ENCODE measurements at regions of chr11 and their contacts with region 1.

Region 1: GRCh38 chr11:6812390-6813005 is 13.0 kb upstream of the OR6A2 start:
- DNase-seq: peak; percentile 44
- ATAC-seq: peak; percentile 99
- H3K4me3 Mint-ChIP-seq: no peak overlapping the region
- H3K27ac Mint-ChIP-seq: no peak overlapping the region
- H3K4me1 Mint-ChIP-seq: no peaks in the 10 kb centered on the region
- H3K27me3 Mint-ChIP-seq: peaks cover 10% of the 10 kb centered on the region
- CTCF ChIP-seq: peak; percentile 90

Region 2: DNA sequence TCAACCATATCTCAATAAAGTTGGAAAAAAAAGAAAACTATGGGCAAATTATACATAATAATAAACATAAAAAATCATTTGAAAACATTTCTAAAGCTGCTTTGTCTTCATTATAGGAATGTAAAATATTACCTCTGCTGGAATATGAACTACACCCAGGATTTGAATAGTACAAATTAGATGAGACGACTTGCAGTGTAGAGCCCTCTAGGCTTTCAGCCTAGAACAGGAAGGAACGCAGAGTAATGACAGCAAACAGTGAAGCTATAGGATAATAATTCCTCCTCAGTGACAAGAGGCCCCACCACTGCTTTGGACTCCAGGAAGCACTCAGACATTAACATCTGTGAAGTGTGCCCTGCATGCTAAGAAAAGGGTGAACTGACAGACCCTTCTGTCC is 22.0 kb before region 1 on chr11:
- CTCF ChIA-PET with region 1: interaction called, 25 read pairs
- POLR2A ChIA-PET with region 1: no interaction called
- intact Hi-C with region 1: no loop called
- DNase-seq: no peak
- ATAC-seq: no peak
- H3K4me3 Mint-ChIP-seq: no peak overlapping the region
- H3K27ac Mint-ChIP-seq: no peak overlapping the region
- H3K4me1 Mint-ChIP-seq: no peaks in the 10 kb centered on the region
- H3K27me3 Mint-ChIP-seq: peaks cover 6% of the 10 kb centered on the region
- CTCF ChIP-seq: no peak

Region 3: GRCh38 chr11:6799402-6799801 is 13.1 kb before region 1 on chr11 and contains the start of gene OR6A2:
- CTCF ChIA-PET with region 1: interaction called, 25 read pairs
- POLR2A ChIA-PET with region 1: no interaction called
- intact Hi-C with region 1: no loop called
- DNase-seq: no peak
- ATAC-seq: no peak
- H3K4me3 Mint-ChIP-seq: no peak within 1 kb of the TSS
- H3K27ac Mint-ChIP-seq: no peak within 1 kb of the TSS
- H3K4me1 Mint-ChIP-seq: no peaks in the 10 kb centered on the region
- H3K27me3 Mint-ChIP-seq: no peaks in the 10 kb centered on the region
- CTCF ChIP-seq: no peak
- total RNA-seq, gene OR6A2: 0.16 to 0.38 TPM

Region 4: GRCh38 chr11:6825231-6825744 is 12.8 kb after region 1 on chr11:
- CTCF ChIA-PET with region 1: interaction called, 19 read pairs
- POLR2A ChIA-PET with region 1: no interaction called
- intact Hi-C with region 1: no loop called
- DNase-seq: no peak
- ATAC-seq: no peak
- H3K4me3 Mint-ChIP-seq: no peak overlapping the region
- H3K27ac Mint-ChIP-seq: no peak overlapping the region
- H3K4me1 Mint-ChIP-seq: no peaks in the 10 kb centered on the region
- H3K27me3 Mint-ChIP-seq: peaks cover 6% of the 10 kb centered on the region
- CTCF ChIP-seq: no peak

Region 5: GRCh38 chr11:6833356-6833755 is 20.9 kb after region 1 on chr11:
- CTCF ChIA-PET with region 1: interaction called, 11 read pairs
- POLR2A ChIA-PET with region 1: no interaction called
- intact Hi-C with region 1: no loop called
- DNase-seq: no peak
- ATAC-seq: no peak
- H3K4me3 Mint-ChIP-seq: no peak overlapping the region
- H3K27ac Mint-ChIP-seq: no peak overlapping the region
- H3K4me1 Mint-ChIP-seq: no peaks in the 10 kb centered on the region
- H3K27me3 Mint-ChIP-seq: peaks cover 2% of the 10 kb centered on the region
- CTCF ChIP-seq: no peak

Region 6: GRCh38 chr11:7046474-7047175 is 234.1 kb after region 1 on chr11:
- CTCF ChIA-PET with region 1: no interaction called
- POLR2A ChIA-PET with region 1: no interaction called
- intact Hi-C with region 1: no loop called
- DNase-seq: no peak
- ATAC-seq: no peak
- H3K4me3 Mint-ChIP-seq: no peak overlapping the region
- H3K27ac Mint-ChIP-seq: no peak overlapping the region
- H3K4me1 Mint-ChIP-seq: no peaks in the 10 kb centered on the region
- H3K27me3 Mint-ChIP-seq: peaks cover 6% of the 10 kb centered on the region
- CTCF ChIP-seq: no peak

Region 7: DNA sequence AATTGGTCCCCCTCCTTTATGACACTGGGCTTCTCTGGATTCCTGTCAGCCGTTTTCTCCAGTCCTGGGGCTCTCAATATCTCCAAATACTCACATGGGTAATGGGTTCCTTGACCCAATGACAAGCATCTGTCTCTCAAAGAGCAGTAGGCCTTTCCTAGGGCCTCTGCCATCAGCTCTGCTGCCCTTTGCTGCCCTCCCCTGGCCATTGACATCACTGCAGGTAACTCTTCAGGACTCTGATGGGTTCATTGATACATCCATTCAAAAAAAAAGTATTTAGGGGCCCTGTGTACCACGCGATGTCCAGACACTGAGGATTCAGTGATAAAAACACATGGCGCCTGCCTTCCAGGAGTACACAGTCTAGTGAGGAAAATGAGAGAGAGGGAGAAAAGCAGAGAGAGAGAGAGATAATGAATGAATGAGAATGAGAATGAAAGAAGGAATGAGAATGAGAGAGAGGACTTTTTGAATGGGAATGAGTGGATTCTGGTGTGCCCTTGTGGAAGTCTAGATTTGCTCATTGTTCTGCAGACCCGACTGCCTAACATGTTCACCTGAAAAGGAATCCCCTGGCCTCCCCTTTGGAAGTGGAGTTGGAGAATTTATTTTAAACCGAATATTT is 630.2 kb after region 1 on chr11:
- CTCF ChIA-PET with region 1: interaction called, 11 read pairs
- POLR2A ChIA-PET with region 1: no interaction called
- intact Hi-C with region 1: no loop called
- DNase-seq: peak; percentile 87
- ATAC-seq: peak; percentile 97
- H3K4me3 Mint-ChIP-seq: no peak overlapping the region
- H3K27ac Mint-ChIP-seq: no peak overlapping the region
- H3K4me1 Mint-ChIP-seq: no peaks in the 10 kb centered on the region
- H3K27me3 Mint-ChIP-seq: no peaks in the 10 kb centered on the region
- CTCF ChIP-seq: peak; percentile 82

Measured in activated CD8-positive, alpha-beta T cell treated with anti-CD3 and anti-CD28 coated beads for 36 hours (primary cell).